ENCODE measurements at regions of chr19 and their contacts with region 1.

Region 1: GRCh38 chr19:39846176-39846677 is at the start of gene FBL:
- DNase-seq: peak; percentile 98
- H3K4me3 Mint-ChIP-seq: peak within 1 kb of the TSS; percentile 88
- H3K27ac Mint-ChIP-seq: peak within 1 kb of the TSS; percentile 87
- H3K4me1 Mint-ChIP-seq: peaks cover 48% of the 10 kb centered on the region
- H3K27me3 Mint-ChIP-seq: no peaks in the 10 kb centered on the region
- total RNA-seq, gene FBL: 294 to 302 TPM

Region 2: GRCh38 chr19:39671738-39672363 is 174.4 kb before region 1 on chr19:
- CTCF ChIA-PET with region 1: interaction called, 33 read pairs
- POLR2A ChIA-PET with region 1: interaction called, 5 read pairs
- DNase-seq: peak; percentile 48
- H3K4me3 Mint-ChIP-seq: no peak overlapping the region
- H3K27ac Mint-ChIP-seq: no peak overlapping the region
- H3K4me1 Mint-ChIP-seq: peaks cover 26% of the 10 kb centered on the region
- H3K27me3 Mint-ChIP-seq: peaks cover 15% of the 10 kb centered on the region

Region 3: GRCh38 chr19:39704181-39705044 is 141.8 kb before region 1 on chr19 and contains the start of gene LGALS14:
- CTCF ChIA-PET with region 1: no interaction called
- POLR2A ChIA-PET with region 1: no interaction called
- DNase-seq: no peak
- H3K4me3 Mint-ChIP-seq: no peak within 1 kb of the TSS
- H3K27ac Mint-ChIP-seq: peak within 1 kb of the TSS; percentile 23
- H3K4me1 Mint-ChIP-seq: peaks cover 27% of the 10 kb centered on the region
- H3K27me3 Mint-ChIP-seq: peaks cover 2% of the 10 kb centered on the region
- total RNA-seq, gene LGALS14: 0.90 TPM in 1 of 2 experiments, not detected in the other

Region 4: GRCh38 chr19:39765091-39766076 is 80.8 kb before region 1 on chr19:
- CTCF ChIA-PET with region 1: interaction called, 11 read pairs
- POLR2A ChIA-PET with region 1: interaction called, 8 read pairs
- DNase-seq: no peak
- H3K4me3 Mint-ChIP-seq: no peak overlapping the region
- H3K27ac Mint-ChIP-seq: no peak overlapping the region
- H3K4me1 Mint-ChIP-seq: peaks cover 8% of the 10 kb centered on the region
- H3K27me3 Mint-ChIP-seq: peaks cover 15% of the 10 kb centered on the region

Region 5: GRCh38 chr19:39792999-39793546 is 53.2 kb before region 1 on chr19:
- CTCF ChIA-PET with region 1: interaction called, 114 read pairs
- POLR2A ChIA-PET with region 1: interaction called, 5 read pairs
- DNase-seq: peak; percentile 78
- H3K4me3 Mint-ChIP-seq: peak overlapping the region; percentile 73
- H3K27ac Mint-ChIP-seq: no peak overlapping the region
- H3K4me1 Mint-ChIP-seq: peaks cover 14% of the 10 kb centered on the region
- H3K27me3 Mint-ChIP-seq: peaks cover 24% of the 10 kb centered on the region

Region 6: GRCh38 chr19:39824143-39825092 is 21.8 kb before region 1 on chr19:
- CTCF ChIA-PET with region 1: interaction called, 11 read pairs
- POLR2A ChIA-PET with region 1: interaction called, 5 read pairs
- DNase-seq: peak; percentile 91
- H3K4me3 Mint-ChIP-seq: no peak overlapping the region
- H3K27ac Mint-ChIP-seq: no peak overlapping the region
- H3K4me1 Mint-ChIP-seq: peaks cover 10% of the 10 kb centered on the region
- H3K27me3 Mint-ChIP-seq: no peaks in the 10 kb centered on the region

Region 7: GRCh38 chr19:39833464-39834286 is 12.6 kb before region 1 on chr19 and contains the start of gene DYRK1B:
- CTCF ChIA-PET with region 1: interaction called, 51 read pairs
- POLR2A ChIA-PET with region 1: interaction called, 62 read pairs
- DNase-seq: peak; percentile 97
- H3K4me3 Mint-ChIP-seq: peak within 1 kb of the TSS; percentile 65
- H3K27ac Mint-ChIP-seq: peak within 1 kb of the TSS; percentile 78
- H3K4me1 Mint-ChIP-seq: peaks cover 30% of the 10 kb centered on the region
- H3K27me3 Mint-ChIP-seq: no peaks in the 10 kb centered on the region
- total RNA-seq, gene DYRK1B: 13.8 to 14.2 TPM